ENCODE measurements at regions of chr1 and their contacts with region 1.

Region 1: GRCh38 chr1:103461161-103462105 is 64.1 kb upstream of the RNPC3 start:
- DNase-seq: no peak
- ATAC-seq: no peak
- H3K4me3 ChIP-seq: no peak overlapping the region
- H3K27ac ChIP-seq: peak overlapping the region; percentile 35; the same call in 1 of the 2 replicates
- H3K4me1 ChIP-seq: no peaks in the 10 kb centered on the region
- H3K27me3 ChIP-seq: no peaks in the 10 kb centered on the region
- CTCF ChIP-seq: peak; percentile 47; the same call in 1 of the 2 replicates

Region 2: DNA sequence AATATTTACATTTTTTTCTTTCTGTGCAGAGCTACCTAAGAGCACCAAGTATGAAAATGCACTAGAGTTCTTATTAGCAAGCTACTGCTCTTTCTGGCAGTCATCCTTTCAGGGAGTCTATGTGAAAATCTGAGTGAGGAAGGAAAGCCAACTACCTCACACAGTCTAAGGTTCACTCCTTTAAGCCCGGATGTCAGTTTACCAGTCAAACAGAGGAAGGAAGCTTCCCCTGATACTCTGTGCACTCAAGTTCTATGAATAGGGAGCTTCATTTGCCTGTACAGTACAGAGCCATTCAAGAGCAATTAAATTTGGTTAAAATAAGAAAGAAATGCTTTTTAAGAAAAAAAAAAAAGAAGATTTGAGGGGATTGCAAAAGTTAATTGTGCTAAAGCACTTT is 360.0 kb before region 1 on chr1:
- CTCF ChIA-PET with region 1: interaction called, 15 read pairs
- POLR2A ChIA-PET with region 1: no interaction called
- in situ Hi-C with region 1: no loop called
- intact Hi-C with region 1: loop called (anchors 5 kb)
- DNase-seq: no peak
- ATAC-seq: 0 out of 2 replicates have a peak, but pooled peaks have one; percentile 53
- H3K4me3 ChIP-seq: no peak overlapping the region
- H3K27ac ChIP-seq: peak overlapping the region; percentile 57; the same call in 1 of the 2 replicates
- H3K4me1 ChIP-seq: no peaks in the 10 kb centered on the region; the same call in none of the 2 replicates
- H3K27me3 ChIP-seq: no peaks in the 10 kb centered on the region
- CTCF ChIP-seq: no peak

Region 3: DNA sequence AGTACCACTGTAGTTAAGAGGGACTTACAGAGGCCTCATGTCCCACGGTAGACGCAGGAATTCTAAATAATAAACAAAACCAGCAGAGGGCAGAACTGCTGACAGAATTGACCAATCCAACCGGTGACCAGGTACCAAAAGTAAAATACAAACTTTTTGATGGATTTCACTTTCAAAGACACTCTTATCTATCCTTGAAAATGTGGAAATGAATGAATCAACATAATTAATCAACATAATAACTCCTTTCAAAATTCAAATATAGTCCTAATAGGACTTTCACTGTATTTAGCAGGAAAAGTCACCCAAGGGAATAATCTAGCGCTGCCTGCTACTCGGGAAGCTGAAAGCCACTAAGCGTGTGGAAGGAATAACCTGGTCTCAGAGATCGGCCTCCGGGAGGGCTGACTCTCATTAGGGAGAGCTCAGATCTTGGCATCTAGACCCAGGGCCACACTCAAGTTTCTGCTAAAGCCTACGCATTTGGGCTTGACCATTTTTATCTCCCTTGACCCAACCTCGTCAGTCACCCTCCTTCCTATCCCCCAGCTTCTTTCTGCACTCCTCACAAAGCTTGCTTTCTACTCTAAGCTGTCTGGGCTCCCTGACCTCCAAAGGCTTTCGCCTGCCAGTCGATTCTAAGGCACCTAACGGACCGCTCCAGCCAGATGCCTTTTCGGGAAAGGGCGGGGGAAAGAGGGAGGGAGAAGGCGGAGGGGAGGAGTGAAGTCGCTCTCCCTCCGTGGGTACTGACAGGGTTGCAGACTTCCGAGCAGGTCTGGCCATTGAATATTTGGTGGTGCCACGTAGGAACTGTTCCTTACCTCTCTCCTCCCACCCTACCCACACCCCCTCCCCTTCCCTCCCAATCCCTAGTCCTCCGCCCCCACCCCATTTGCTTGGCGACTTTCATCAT is 354.7 kb before region 1 on chr1:
- CTCF ChIA-PET with region 1: interaction called, 15 read pairs
- POLR2A ChIA-PET with region 1: no interaction called
- in situ Hi-C with region 1: no loop called
- intact Hi-C with region 1: loop called (anchors 5 kb)
- DNase-seq: peak; percentile 45
- ATAC-seq: peak; percentile 86
- H3K4me3 ChIP-seq: peak overlapping the region; percentile 60 to 72
- H3K27ac ChIP-seq: peak overlapping the region; percentile 82
- H3K4me1 ChIP-seq: no peaks in the 10 kb centered on the region; the same call in 1 of the 2 replicates
- H3K27me3 ChIP-seq: no peaks in the 10 kb centered on the region
- CTCF ChIP-seq: peak; percentile 57; the same call in 1 of the 2 replicates

Region 4: GRCh38 chr1:103336408-103336807 is 125.0 kb before region 1 on chr1:
- CTCF ChIA-PET with region 1: no interaction called
- POLR2A ChIA-PET with region 1: no interaction called
- in situ Hi-C with region 1: no loop called
- intact Hi-C with region 1: no loop called
- DNase-seq: no peak
- ATAC-seq: no peak
- H3K4me3 ChIP-seq: no peak overlapping the region
- H3K27ac ChIP-seq: no peak overlapping the region
- H3K4me1 ChIP-seq: no peaks in the 10 kb centered on the region
- H3K27me3 ChIP-seq: no peaks in the 10 kb centered on the region
- CTCF ChIP-seq: no peak

Measured in Panc1 (cell line).